Natural killer cell (primary cell): ENCODE measurements at regions of chr6 and their contacts with region 1.

Region 1: DNA sequence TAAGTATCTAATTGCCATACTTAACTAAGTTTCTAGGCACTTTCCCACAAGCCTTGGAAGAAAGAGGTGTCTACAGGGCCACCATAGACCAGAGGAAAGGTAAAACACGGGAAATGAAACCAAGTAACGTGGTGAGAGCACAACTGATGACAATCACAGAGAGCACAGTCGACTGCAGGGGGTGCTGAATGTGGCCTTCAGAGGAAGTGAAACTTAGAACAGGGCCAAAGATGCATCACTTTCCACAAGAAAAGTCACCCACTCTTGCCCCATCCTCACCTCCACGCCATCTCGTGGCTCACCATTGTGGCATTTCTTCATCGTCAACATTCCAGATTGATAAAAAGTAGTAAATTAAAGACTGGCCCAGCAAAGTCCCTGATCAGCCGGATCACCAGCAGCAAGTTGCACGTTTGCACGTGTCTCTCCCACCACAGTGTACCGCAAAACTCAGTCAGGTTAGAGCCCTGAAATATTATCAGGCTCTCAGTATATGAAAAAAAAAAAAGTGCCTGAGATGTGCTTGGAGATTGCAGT is 31.4 kb downstream of the HIVEP2 start:
- DNase-seq: peak; percentile 51 to 89
- ATAC-seq: peak; percentile 73 to 86 (median 80)
- H3K4me3 ChIP-seq: no peak overlapping the region
- H3K4me3 Mint-ChIP-seq: peak overlapping the region; percentile 68
- H3K27ac ChIP-seq: peak overlapping the region; percentile 84
- H3K27ac Mint-ChIP-seq: peak overlapping the region; percentile 78 to 90
- H3K4me1 ChIP-seq: peaks cover 36% of the 10 kb centered on the region
- H3K4me1 Mint-ChIP-seq: peaks cover 41 to 44% of the 10 kb centered on the region in 2 donors
- H3K27me3 ChIP-seq: no peaks in the 10 kb centered on the region
- H3K27me3 Mint-ChIP-seq: no peaks in the 10 kb centered on the region
- CTCF ChIP-seq: peak; percentile 54

Region 2: DNA sequence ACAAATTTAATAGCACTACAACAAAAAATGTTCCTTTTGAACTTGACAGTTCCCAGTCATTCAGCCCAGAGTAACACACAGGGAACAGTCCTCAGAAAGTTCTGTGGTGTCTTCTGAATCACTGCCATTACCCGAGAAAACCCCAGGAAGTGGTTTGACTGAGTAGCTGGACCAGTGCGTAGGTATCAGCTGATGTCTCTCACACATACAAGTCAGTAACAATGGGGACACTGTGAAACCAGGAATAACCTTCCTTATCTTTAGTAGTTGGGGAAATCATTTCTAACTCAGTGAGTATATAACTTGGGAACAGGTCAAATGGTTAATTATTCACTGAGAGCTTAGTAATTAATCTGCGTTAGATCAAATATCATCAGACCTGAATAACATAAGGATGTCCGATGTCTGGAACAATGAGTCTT is 41.7 kb before region 1 on chr6:
- intact Hi-C with region 1: loop called (anchors 5 kb)
- DNase-seq: peak; percentile 34 to 87
- ATAC-seq: peak; percentile 74 to 93 (median 84)
- H3K4me3 ChIP-seq: no peak overlapping the region
- H3K4me3 Mint-ChIP-seq: peak overlapping the region; percentile 35
- H3K27ac ChIP-seq: peak overlapping the region; percentile 28
- H3K27ac Mint-ChIP-seq: peak overlapping the region; percentile 74 to 83
- H3K4me1 ChIP-seq: peaks cover 7% of the 10 kb centered on the region
- H3K4me1 Mint-ChIP-seq: peaks cover 55 to 57% of the 10 kb centered on the region in 2 donors
- H3K27me3 ChIP-seq: no peaks in the 10 kb centered on the region
- H3K27me3 Mint-ChIP-seq: no peaks in the 10 kb centered on the region
- CTCF ChIP-seq: no peak

Region 3: GRCh38 chr6:142902636-142903053 is 10.9 kb before region 1 on chr6:
- intact Hi-C with region 1: loop called (anchors 1 kb)
- DNase-seq: peak; percentile 80 to 93
- ATAC-seq: peak; percentile 89 to 98 (median 90)
- H3K4me3 ChIP-seq: no peak overlapping the region
- H3K4me3 Mint-ChIP-seq: peak overlapping the region; percentile 86
- H3K27ac ChIP-seq: peak overlapping the region; percentile 87
- H3K27ac Mint-ChIP-seq: peak overlapping the region; percentile 93 to 98
- H3K4me1 ChIP-seq: peaks cover 14% of the 10 kb centered on the region
- H3K4me1 Mint-ChIP-seq: peaks cover 40 to 43% of the 10 kb centered on the region in 2 donors
- H3K27me3 ChIP-seq: no peaks in the 10 kb centered on the region
- H3K27me3 Mint-ChIP-seq: no peaks in the 10 kb centered on the region
- CTCF ChIP-seq: no peak

Region 4: DNA sequence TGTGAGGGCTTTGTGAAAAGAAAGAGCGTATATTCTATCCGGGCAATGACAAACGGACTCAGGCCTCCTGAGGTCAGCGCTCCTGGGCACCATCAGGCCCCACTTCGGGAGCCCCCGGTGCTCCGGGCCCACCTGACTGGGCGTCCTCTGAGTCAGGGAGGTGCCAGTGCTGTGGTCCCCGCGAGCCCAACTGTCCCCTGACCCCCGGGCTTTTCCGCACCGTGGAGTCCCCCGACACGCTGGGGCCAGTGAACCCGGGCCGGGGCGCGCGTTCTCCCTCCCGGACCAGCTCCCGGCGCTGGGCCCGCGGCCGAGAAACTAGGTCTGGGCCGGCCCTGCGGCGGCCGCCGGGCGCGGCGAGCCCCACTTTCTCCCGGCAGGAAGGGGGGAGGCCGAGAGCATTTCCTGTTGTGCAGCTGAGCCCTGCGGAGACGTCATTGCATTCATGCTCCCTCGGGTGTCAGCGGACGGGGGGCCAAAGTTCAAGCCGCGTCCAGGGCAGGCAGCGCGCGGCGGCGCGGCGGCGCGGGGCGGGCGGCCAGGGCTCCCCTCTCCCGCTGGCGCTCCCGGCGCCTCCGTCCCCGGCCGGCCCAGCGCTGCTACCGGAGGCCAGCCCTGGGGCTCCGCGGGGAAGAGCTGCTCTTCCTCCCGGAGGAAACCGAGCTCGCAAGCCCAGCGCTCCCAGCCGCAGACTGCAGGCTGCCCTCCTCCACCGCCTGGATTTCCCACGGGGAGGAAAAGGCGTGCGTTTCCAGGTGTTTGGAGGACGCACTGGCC is 13.1 kb after region 1 on chr6:
- intact Hi-C with region 1: loop called (anchors 1 kb)
- DNase-seq: peak; percentile 76 to 90
- ATAC-seq: peak; percentile 83 to 93 (median 89)
- H3K4me3 ChIP-seq: peak overlapping the region; percentile 93
- H3K4me3 Mint-ChIP-seq: peak overlapping the region; percentile 95
- H3K27ac ChIP-seq: peak overlapping the region; percentile 100
- H3K27ac Mint-ChIP-seq: peak overlapping the region; percentile 94 to 95
- H3K4me1 ChIP-seq: peaks cover 6% of the 10 kb centered on the region
- H3K4me1 Mint-ChIP-seq: peaks cover 34% of the 10 kb centered on the region in 2 donors
- H3K27me3 ChIP-seq: no peaks in the 10 kb centered on the region
- H3K27me3 Mint-ChIP-seq: no peaks in the 10 kb centered on the region
- CTCF ChIP-seq: no peak